HEK293T (cell line): ENCODE measurements at regions of chr1 and their contacts with region 1.

Region 1: GRCh38 chr1:15975805-15976680 is at the start of gene ZBTB17:
- DNase-seq: peak; percentile 97

Region 2: GRCh38 chr1:15788624-15789301 is 187.3 kb before region 1 on chr1:
- CTCF ChIA-PET with region 1: interaction called, 11 read pairs
- POLR2A ChIA-PET with region 1: interaction called, 3 read pairs
- DNase-seq: no peak

Region 3: DNA sequence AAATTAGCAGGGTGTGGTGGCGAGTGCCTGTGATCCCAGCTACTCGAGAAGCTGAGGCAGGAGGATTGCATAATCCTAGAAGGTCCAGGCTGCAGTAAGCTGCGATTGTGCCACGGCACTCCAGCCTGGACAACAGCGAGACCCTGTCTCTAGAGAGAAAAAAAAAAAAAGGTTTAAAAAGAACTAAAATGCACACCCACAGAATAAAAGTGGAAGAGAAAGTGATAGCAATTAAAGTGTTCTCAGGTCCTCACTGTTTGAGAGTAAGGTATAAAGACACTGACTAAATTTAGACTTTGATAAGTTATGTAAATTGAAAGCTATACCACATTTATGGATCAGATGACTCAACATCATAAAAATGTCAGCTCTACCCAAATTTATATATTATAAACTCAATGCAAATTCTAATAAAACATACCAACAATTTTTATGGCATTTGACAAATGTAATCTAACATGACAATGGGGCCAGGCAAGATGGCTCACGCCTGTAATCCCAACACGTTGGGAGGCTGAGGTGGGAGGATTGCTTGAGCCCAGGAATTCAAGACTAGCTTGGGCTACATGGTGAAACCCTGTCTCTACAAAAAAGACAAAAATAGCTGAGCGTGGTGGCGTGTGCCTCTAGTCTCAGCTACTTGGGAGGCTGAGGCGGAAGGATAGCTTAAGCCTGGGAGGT is 11.9 kb before region 1 on chr1:
- CTCF ChIA-PET with region 1: interaction called, 4 read pairs
- POLR2A ChIA-PET with region 1: interaction called, 12 read pairs
- DNase-seq: no peak